WTC11 (cell line): ENCODE measurements at regions of chr3 and their contacts with region 1.

Region 1: GRCh38 chr3:115713284-115713683 is 90.0 kb downstream of the GAP43 start:
- DNase-seq: no peak
- ATAC-seq: peak; percentile 47
- H3K4me3 Mint-ChIP-seq: no peak overlapping the region
- H3K27ac Mint-ChIP-seq: no peak overlapping the region
- H3K4me1 Mint-ChIP-seq: peaks cover 25% of the 10 kb centered on the region
- H3K27me3 Mint-ChIP-seq: no peaks in the 10 kb centered on the region
- CTCF ChIP-seq: no peak

Region 2: GRCh38 chr3:115388811-115389210 is 324.5 kb before region 1 on chr3:
- CTCF ChIA-PET with region 1: no interaction called
- POLR2A ChIA-PET with region 1: interaction called, 10 read pairs
- DNase-seq: no peak
- ATAC-seq: no peak
- H3K4me3 Mint-ChIP-seq: no peak overlapping the region
- H3K27ac Mint-ChIP-seq: no peak overlapping the region
- H3K4me1 Mint-ChIP-seq: peaks cover 51% of the 10 kb centered on the region
- H3K27me3 Mint-ChIP-seq: no peaks in the 10 kb centered on the region
- CTCF ChIP-seq: no peak